ENCODE measurements at regions of chr3 and their contacts with region 1.

Region 1: DNA sequence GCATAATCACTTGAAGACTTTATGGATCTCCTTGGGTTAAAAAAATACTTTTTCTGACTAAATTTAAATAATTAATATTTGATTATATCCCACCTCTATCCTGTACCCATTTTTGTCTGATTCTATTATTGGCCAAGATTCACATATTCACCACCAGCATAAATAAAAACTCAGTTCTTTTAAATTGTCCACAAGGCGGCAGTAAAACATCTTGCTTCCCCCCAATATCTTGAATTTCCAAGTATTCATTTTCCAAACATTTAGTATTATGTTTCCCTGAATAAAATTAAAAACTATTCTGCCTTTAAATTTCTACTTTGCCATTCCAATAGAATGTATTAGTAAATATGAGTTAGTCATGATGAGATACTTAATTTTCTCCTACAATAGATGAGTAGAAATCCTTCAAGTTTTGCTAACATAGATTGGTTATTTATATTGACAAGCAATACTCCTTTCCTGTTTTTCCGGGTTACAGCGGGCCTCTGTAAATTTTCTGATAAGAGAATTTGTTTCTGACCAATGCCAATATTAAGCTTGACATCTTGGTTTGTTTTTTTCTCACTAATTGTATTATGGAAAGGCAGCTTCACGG is 218.7 kb upstream of the MDFIC2 start:
- DNase-seq: no peak
- H3K4me3 ChIP-seq: no peak overlapping the region
- H3K27ac ChIP-seq: no peak overlapping the region
- H3K4me1 ChIP-seq: peaks cover 0 to 20% (median 7%) of the 10 kb centered on the region in 4 donors
- H3K27me3 ChIP-seq: no peaks in the 10 kb centered on the region
- CTCF ChIP-seq: peak; percentile 16 to 51 (median 40)
- EP300 ChIP-seq: no peak
- POLR2A ChIP-seq: no peak

Region 2: GRCh38 chr3:71601811-71602210 is 1070.7 kb after region 1 on chr3:
- intact Hi-C with region 1: loop called (anchors 5 kb)
- DNase-seq: no peak
- H3K4me3 ChIP-seq: no peak overlapping the region
- H3K27ac ChIP-seq: no peak overlapping the region
- H3K4me1 ChIP-seq: no peaks in the 10 kb centered on the region
- H3K27me3 ChIP-seq: no peaks in the 10 kb centered on the region
- CTCF ChIP-seq: no peak
- EP300 ChIP-seq: no peak
- POLR2A ChIP-seq: no peak

Measured in sigmoid colon (tissue), 7 donors.